ENCODE measurements at regions of chr22 and their contacts with region 1.

Region 1: DNA sequence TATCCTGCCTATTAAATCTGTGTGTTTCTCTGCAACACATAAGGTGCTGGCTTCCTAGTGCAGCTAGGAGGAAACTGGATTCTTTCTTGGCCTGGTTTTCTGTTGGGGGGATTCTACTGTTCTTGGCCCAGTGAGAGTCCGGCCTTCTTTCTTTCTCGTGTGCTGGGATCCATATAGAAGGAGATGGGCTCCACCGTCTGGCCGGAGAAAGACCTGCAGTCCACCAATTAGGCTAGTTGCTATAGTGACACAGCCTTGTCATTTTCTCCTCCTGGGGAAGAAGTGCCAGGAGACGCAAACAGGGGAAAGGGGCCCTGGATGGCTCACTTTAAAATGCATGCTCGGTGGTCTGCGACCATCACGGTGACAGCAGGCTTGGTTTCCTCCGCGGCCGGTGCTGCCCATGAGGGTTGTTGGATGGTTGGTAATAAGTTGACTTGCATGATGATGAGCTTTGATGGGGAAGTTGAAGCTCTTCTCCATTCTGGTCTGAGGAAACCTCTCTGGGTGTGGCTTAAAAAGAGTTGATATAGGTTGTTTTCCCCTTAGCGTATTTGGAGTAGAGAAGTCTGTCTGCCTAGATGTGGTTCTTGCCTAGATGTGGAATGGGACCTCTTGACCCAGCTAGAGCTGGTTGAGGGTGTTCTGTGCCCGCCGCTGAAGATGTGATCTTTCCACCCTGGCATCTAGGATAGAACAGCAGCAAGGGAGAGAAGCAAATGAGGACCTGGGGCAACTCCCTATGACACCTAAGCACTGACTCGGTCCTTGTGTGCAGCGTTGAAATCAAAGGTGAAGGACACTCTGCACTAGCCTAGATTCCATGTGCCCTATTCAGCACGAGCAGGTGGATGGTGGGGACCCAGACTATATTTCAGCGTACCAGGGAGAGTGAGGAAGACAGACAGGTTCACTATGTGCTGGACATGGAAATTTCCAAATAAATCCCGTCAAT is 1335.0 kb downstream of the BRD1 start:
- DNase-seq: peak in 9 of 10 donors; percentile 61 to 95 (median 78)

Region 2: DNA sequence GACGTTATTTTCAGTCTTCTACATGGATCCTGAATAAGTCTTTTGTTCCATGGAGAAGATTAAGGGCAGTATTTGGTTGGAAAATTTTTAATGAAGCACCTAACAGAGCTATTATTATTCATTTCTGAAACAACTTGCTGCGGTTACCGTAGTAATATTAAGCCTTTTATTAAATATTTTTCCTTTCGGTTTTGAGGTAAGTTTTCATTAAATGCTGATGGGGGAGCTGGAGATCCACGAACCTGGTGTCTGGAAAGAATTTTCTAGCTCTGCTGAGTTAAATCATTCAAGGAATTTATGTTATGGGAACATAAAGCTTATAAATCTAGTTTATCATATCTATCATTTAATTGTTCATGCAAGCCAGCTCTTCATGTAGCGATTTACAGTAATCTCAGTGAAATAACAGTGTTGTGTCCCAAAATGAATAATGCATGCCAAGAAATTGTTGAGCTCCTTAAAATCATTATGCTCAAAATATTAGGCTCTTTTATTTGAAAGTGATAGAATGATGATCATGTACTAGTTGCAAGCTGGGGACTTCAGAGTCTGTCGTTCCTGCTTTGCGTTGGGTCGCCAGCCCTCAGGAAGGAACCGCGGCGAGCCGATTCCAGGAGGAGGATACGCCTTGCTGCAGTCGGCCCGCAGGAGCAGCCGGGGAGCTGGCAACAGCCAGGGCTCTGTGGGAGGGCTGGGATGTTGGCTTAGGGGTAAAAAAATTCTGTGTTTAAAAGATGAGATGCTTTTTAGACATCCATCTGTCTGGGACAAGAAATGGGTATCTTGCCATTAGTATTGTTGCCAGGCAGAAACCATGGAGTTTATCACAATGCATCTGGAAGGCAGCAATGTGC is 1647.1 kb before region 1 on chr22:
- intact Hi-C with region 1: loop called (anchors 10 kb)
- DNase-seq: peak in 8 of 10 donors; percentile 48 to 95 (median 56)

Region 3: GRCh38 chr22:47626428-47627390 is 865.9 kb before region 1 on chr22:
- intact Hi-C with region 1: loop called (anchors 10 kb)
- DNase-seq: peak in 1 of 10 donors; percentile 8

Region 4: GRCh38 chr22:48405741-48406140 is 86.9 kb before region 1 on chr22:
- intact Hi-C with region 1: loop called (anchors 5 kb)
- DNase-seq: no peak

Measured in posterior cingulate gyrus (tissue), 11 donors.